Activated B cell treated with CpG ODN at 0.5 μM for 24 hours (primary cell): ENCODE measurements at regions of chr1 and their contacts with region 1.

Region 1: DNA sequence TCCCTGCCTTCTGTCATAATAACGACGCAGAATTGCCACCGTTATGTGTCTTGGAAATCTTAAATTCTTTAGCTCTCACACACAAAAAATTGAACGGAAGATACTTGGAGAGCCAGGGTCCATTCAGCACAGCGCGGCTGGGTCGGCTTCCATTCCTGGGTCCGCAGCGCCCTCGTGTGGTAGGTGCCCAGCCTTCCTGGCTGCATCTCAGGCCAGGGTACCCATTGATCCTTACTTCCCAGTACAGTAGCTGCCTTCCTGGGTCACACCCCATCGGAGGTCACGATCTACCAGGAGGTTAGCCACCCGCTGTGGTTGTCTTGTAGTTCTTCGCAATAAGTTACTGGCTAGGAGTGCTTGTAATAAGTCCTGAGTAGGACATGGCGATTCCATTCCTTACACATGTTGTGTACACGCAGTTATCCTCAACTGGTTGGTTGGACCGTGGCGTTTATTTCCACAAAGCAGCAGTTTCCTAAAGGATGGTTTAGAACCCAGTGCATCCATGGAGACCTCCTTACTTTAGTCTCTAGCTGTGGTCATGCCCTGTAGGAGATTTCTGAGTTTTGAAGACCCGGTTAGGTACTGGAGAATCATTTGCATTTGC is 9.9 kb upstream of the MTARC1 start:
- DNase-seq: peak; percentile 76
- ATAC-seq: peak; percentile 94
- H3K4me3 Mint-ChIP-seq: no peak overlapping the region
- H3K27ac Mint-ChIP-seq: no peak overlapping the region
- H3K4me1 Mint-ChIP-seq: peaks cover 24% of the 10 kb centered on the region
- H3K27me3 Mint-ChIP-seq: no peaks in the 10 kb centered on the region
- CTCF ChIP-seq: peak; percentile 32

Region 2: GRCh38 chr1:219837274-219837993 is 939.4 kb before region 1 on chr1:
- CTCF ChIA-PET with region 1: no interaction called
- POLR2A ChIA-PET with region 1: no interaction called
- intact Hi-C with region 1: loop called (anchors 5 kb)
- DNase-seq: no peak
- ATAC-seq: no peak
- H3K4me3 Mint-ChIP-seq: no peak overlapping the region
- H3K27ac Mint-ChIP-seq: no peak overlapping the region
- H3K4me1 Mint-ChIP-seq: no peaks in the 10 kb centered on the region
- H3K27me3 Mint-ChIP-seq: peaks cover 25% of the 10 kb centered on the region
- CTCF ChIP-seq: no peak

Region 3: GRCh38 chr1:220113136-220113695 is 663.6 kb before region 1 on chr1:
- CTCF ChIA-PET with region 1: interaction called, 4 read pairs
- POLR2A ChIA-PET with region 1: no interaction called
- intact Hi-C with region 1: loop called (anchors 1 kb)
- DNase-seq: no peak
- ATAC-seq: peak; percentile 71
- H3K4me3 Mint-ChIP-seq: peak overlapping the region; percentile 25
- H3K27ac Mint-ChIP-seq: no peak overlapping the region
- H3K4me1 Mint-ChIP-seq: peaks cover 6% of the 10 kb centered on the region
- H3K27me3 Mint-ChIP-seq: no peaks in the 10 kb centered on the region
- CTCF ChIP-seq: no peak

Region 4: DNA sequence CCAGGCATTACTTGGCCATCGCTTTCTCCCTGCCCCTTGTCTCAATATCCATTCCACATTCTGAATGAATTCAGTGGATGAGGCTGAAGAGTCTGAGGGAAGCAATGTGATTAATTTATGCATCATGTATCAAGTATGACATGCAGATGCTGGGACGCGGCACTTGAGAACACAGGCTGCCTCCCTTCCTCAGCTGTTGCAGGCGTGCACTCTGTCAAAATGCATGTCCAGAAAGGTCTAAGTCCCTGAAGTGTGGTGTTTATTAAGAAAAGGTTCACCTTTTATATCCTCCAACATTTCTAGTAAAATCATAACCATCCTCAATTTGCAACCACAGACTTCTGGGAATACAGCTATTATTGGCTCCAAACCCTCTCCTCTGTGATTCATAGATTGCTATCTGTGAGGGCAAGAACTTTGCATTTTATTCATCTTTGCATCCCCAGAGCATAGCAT is 481.9 kb before region 1 on chr1:
- CTCF ChIA-PET with region 1: interaction called, 10 read pairs
- POLR2A ChIA-PET with region 1: no interaction called
- intact Hi-C with region 1: loop called (anchors 1 kb)
- DNase-seq: no peak
- ATAC-seq: no peak
- H3K4me3 Mint-ChIP-seq: no peak overlapping the region
- H3K27ac Mint-ChIP-seq: no peak overlapping the region
- H3K4me1 Mint-ChIP-seq: no peaks in the 10 kb centered on the region
- H3K27me3 Mint-ChIP-seq: peaks cover 13% of the 10 kb centered on the region
- CTCF ChIP-seq: no peak

Region 5: DNA sequence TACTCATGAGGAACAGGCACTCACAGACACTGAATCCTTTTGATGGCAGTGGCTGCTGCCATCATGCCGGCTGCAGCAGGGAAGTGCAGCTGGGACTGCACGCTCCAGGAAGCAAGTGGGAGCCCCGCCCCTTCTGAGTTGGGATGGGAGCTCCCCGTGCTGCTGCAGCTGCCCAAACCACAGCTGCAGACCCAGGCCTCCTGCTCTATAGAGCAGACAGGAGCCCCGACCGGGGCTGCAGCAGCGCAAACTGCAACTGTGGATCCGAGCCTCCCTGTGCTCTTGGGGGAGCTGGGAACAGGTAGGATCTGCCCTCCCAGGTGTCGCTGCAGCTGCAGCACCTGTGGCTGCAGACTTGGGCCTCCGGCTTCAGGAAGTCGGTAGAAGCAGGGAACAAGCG is 314.0 kb before region 1 on chr1:
- CTCF ChIA-PET with region 1: no interaction called
- POLR2A ChIA-PET with region 1: no interaction called
- intact Hi-C with region 1: no loop called
- DNase-seq: no peak
- ATAC-seq: no peak
- H3K4me3 Mint-ChIP-seq: no peak overlapping the region
- H3K27ac Mint-ChIP-seq: no peak overlapping the region
- H3K4me1 Mint-ChIP-seq: no peaks in the 10 kb centered on the region
- H3K27me3 Mint-ChIP-seq: no peaks in the 10 kb centered on the region
- CTCF ChIP-seq: no peak

Region 6: DNA sequence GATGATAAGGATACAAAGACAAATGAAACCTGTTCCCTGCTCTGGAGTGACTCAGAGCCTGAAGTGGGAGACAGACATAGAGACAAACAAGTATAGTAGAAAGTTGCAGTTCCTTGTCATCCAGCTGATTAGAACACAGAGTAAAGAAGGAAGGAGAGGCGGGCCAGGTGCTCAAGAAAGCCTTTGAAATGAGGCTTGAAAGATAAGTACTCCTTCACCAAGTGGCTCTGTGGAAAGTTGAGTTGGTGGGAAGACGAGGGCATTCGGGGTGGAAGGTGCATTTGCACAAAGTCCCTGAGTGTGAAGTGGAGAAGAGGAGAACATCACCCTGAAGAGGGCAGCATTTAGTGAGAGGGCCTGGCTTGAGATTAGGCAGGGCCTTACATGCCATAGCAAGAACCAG is 231.9 kb before region 1 on chr1:
- CTCF ChIA-PET with region 1: no interaction called
- POLR2A ChIA-PET with region 1: no interaction called
- intact Hi-C with region 1: loop called (anchors 5 kb)
- DNase-seq: no peak
- ATAC-seq: no peak
- H3K4me3 Mint-ChIP-seq: no peak overlapping the region
- H3K27ac Mint-ChIP-seq: no peak overlapping the region
- H3K4me1 Mint-ChIP-seq: no peaks in the 10 kb centered on the region
- H3K27me3 Mint-ChIP-seq: peaks cover 10% of the 10 kb centered on the region
- CTCF ChIP-seq: no peak

Region 7: DNA sequence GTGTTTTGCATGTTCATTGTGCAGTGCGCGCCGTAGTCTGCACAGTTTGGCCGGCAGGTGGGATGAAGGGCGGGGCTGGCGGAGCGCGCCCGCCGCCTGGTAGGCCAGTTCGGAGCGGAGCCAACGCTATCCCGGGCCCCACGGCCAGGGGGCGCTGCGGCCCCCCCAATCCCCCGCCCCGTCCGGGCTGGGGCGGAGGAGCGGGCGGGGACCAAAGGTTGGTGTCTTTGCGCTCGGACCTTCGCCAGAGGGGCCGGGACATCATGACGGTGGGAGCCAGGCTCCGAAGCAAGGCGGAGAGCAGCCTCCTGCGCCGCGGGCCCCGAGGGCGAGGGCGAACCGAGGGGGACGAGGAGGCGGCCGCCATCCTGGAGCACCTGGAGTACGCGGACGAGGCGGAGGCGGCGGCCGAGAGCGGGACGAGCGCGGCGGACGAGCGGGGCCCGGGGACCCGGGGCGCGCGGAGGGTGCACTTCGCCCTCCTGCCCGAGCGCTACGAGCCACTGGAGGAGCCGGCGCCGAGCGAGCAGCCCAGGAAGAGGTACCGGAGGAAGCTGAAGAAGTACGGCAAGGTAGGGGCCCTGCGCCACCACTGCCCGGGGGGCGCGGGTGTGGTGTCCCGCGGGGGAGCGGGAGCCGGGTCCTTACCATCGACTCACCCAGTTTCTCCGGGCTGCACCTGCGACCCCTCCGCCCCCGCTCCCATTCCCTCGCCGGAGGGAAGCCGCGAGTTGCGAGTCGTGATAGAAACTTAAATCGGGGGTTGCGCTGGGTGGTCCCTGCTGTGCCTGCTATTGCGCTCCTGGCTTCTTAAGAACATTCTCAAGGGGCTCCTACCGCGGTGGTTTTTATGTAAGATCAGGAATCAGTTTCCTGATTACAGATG is 86.4 kb before region 1 on chr1 and contains the start of gene C1orf115:
- CTCF ChIA-PET with region 1: interaction called, 9 read pairs
- POLR2A ChIA-PET with region 1: no interaction called
- intact Hi-C with region 1: loop called (anchors 1 kb)
- DNase-seq: peak; percentile 86
- ATAC-seq: peak; percentile 98
- H3K4me3 Mint-ChIP-seq: peak within 1 kb of the TSS; percentile 92
- H3K27ac Mint-ChIP-seq: peak within 1 kb of the TSS; percentile 68
- H3K4me1 Mint-ChIP-seq: peaks cover 26% of the 10 kb centered on the region
- H3K27me3 Mint-ChIP-seq: peaks cover 5% of the 10 kb centered on the region
- CTCF ChIP-seq: peak; percentile 90
- total RNA-seq, gene C1orf115: 19.6 and 20.0 TPM in 2 replicates

Region 8: GRCh38 chr1:220748089-220748934 is 28.5 kb before region 1 on chr1 and contains the start of gene MTARC2:
- CTCF ChIA-PET with region 1: interaction called, 3 read pairs
- POLR2A ChIA-PET with region 1: interaction called, 18 read pairs
- intact Hi-C with region 1: loop called (anchors 1 kb)
- DNase-seq: peak; percentile 32
- ATAC-seq: peak; percentile 90
- H3K4me3 Mint-ChIP-seq: peak within 1 kb of the TSS; percentile 85
- H3K27ac Mint-ChIP-seq: no peak within 1 kb of the TSS
- H3K4me1 Mint-ChIP-seq: peaks cover 24% of the 10 kb centered on the region
- H3K27me3 Mint-ChIP-seq: peaks cover 39% of the 10 kb centered on the region
- CTCF ChIP-seq: no peak
- total RNA-seq, gene MTARC2: 8.9 and 9.2 TPM in 2 replicates